CD4-positive, alpha-beta T cell (primary cell): ENCODE measurements at regions of chr11 and their contacts with region 1.

Region 1: GRCh38 chr11:55697817-55698216 is 35.8 kb downstream of the OR4C6 start:
- DNase-seq: no peak
- ATAC-seq: no peak
- H3K4me3 ChIP-seq: no peak overlapping the region
- H3K4me3 Mint-ChIP-seq: no peak overlapping the region
- H3K27ac ChIP-seq: no peak overlapping the region
- H3K27ac Mint-ChIP-seq: no peak overlapping the region
- H3K4me1 ChIP-seq: no peaks in the 10 kb centered on the region
- H3K4me1 Mint-ChIP-seq: no peaks in the 10 kb centered on the region
- H3K27me3 ChIP-seq: no peaks in the 10 kb centered on the region
- H3K27me3 Mint-ChIP-seq: no peaks in the 10 kb centered on the region
- CTCF ChIP-seq: no peak

Region 2: GRCh38 chr11:55572548-55572947 is 125.3 kb before region 1 on chr11:
- CTCF ChIA-PET with region 1: no interaction called
- POLR2A ChIA-PET with region 1: no interaction called
- intact Hi-C with region 1: loop called in 1 of 2 experiments (anchors 5 kb)
- DNase-seq: no peak
- ATAC-seq: no peak
- H3K4me3 ChIP-seq: no peak overlapping the region
- H3K4me3 Mint-ChIP-seq: no peak overlapping the region
- H3K27ac ChIP-seq: no peak overlapping the region
- H3K27ac Mint-ChIP-seq: no peak overlapping the region
- H3K4me1 ChIP-seq: no peaks in the 10 kb centered on the region
- H3K4me1 Mint-ChIP-seq: no peaks in the 10 kb centered on the region
- H3K27me3 ChIP-seq: no peaks in the 10 kb centered on the region
- H3K27me3 Mint-ChIP-seq: no peaks in the 10 kb centered on the region
- CTCF ChIP-seq: no peak